ENCODE measurements at regions of chr20 and their contacts with region 1.

Region 1: GRCh38 chr20:44388466-44389023 is 33.0 kb downstream of the HNF4A start:
- DNase-seq: peak; percentile 78
- H3K4me3 ChIP-seq: no peak overlapping the region
- H3K27ac ChIP-seq: no peak overlapping the region
- H3K4me1 ChIP-seq: peaks cover 13% of the 10 kb centered on the region
- H3K27me3 ChIP-seq: no peaks in the 10 kb centered on the region
- CTCF ChIP-seq: peak; percentile 92 to 96

Region 2: GRCh38 chr20:44123251-44123650 is 265.3 kb before region 1 on chr20:
- CTCF ChIA-PET with region 1: interaction called, 12 read pairs
- dilution Hi-C with region 1: loop called (anchors 5 kb)
- in situ Hi-C with region 1: no loop called
- intact Hi-C with region 1: no loop called
- DNase-seq: no peak
- H3K4me3 ChIP-seq: no peak overlapping the region
- H3K27ac ChIP-seq: no peak overlapping the region
- H3K4me1 ChIP-seq: no peaks in the 10 kb centered on the region
- H3K27me3 ChIP-seq: no peaks in the 10 kb centered on the region
- CTCF ChIP-seq: no peak

Region 3: GRCh38 chr20:44310664-44311639 is 77.6 kb before region 1 on chr20 and contains the start of gene FITM2:
- CTCF ChIA-PET with region 1: no interaction called
- dilution Hi-C with region 1: no loop called
- in situ Hi-C with region 1: no loop called
- intact Hi-C with region 1: loop called (anchors 5 kb)
- DNase-seq: peak; percentile 95
- H3K4me3 ChIP-seq: peak within 1 kb of the TSS; percentile 79 to 97 (median 81)
- H3K27ac ChIP-seq: peak within 1 kb of the TSS; percentile 35
- H3K4me1 ChIP-seq: peaks cover 11% of the 10 kb centered on the region
- H3K27me3 ChIP-seq: no peaks in the 10 kb centered on the region
- CTCF ChIP-seq: peak; percentile 85 to 98
- total RNA-seq, gene FITM2: 7.6 to 10.3 TPM

Region 4: DNA sequence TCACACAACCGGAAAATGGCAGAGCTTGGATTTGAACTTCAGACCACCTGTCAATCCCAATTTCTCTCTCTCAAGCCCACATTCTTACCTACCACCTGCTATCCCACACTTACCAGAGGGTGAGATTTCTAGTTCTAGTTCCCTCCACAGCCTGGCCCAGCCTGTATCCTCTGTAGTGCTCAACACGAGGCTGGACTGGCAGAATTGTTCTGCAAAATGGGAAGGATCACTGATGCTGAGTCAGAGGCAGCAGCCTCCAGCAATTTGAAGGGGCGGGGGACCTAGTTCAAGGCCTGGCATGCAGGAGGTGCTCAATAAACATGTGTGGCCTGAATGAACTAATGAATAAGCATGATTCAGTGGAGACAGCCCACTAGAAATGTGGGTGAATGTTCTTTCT is 33.5 kb after region 1 on chr20:
- CTCF ChIA-PET with region 1: no interaction called
- dilution Hi-C with region 1: no loop called
- in situ Hi-C with region 1: no loop called
- intact Hi-C with region 1: no loop called
- DNase-seq: peak; percentile 89
- H3K4me3 ChIP-seq: no peak overlapping the region
- H3K27ac ChIP-seq: no peak overlapping the region
- H3K4me1 ChIP-seq: peaks cover 10% of the 10 kb centered on the region
- H3K27me3 ChIP-seq: no peaks in the 10 kb centered on the region
- CTCF ChIP-seq: no peak

Region 5: GRCh38 chr20:44460795-44461141 is 72.2 kb after region 1 on chr20:
- CTCF ChIA-PET with region 1: interaction called, 4 read pairs
- dilution Hi-C with region 1: no loop called
- in situ Hi-C with region 1: loop called (anchors 5 kb)
- intact Hi-C with region 1: loop called (anchors 1 kb)
- DNase-seq: peak; percentile 27
- H3K4me3 ChIP-seq: no peak overlapping the region
- H3K27ac ChIP-seq: no peak overlapping the region
- H3K4me1 ChIP-seq: peaks cover 11% of the 10 kb centered on the region
- H3K27me3 ChIP-seq: no peaks in the 10 kb centered on the region
- CTCF ChIP-seq: peak; percentile 50 to 65

Region 6: GRCh38 chr20:44521484-44522481 is 133.2 kb after region 1 on chr20 and contains the start of gene SERINC3:
- CTCF ChIA-PET with region 1: no interaction called
- dilution Hi-C with region 1: no loop called
- in situ Hi-C with region 1: no loop called
- intact Hi-C with region 1: loop called (anchors 5 kb)
- DNase-seq: peak; percentile 96
- H3K4me3 ChIP-seq: peak within 1 kb of the TSS; percentile 95 to 99 (median 99)
- H3K27ac ChIP-seq: peak within 1 kb of the TSS; percentile 99
- H3K4me1 ChIP-seq: peaks cover 32% of the 10 kb centered on the region
- H3K27me3 ChIP-seq: no peaks in the 10 kb centered on the region
- CTCF ChIP-seq: peak in 1 of 2 donors; percentile 33
- total RNA-seq, gene SERINC3: 101 to 153 TPM

Region 7: GRCh38 chr20:44683263-44684046 is 294.9 kb after region 1 on chr20:
- CTCF ChIA-PET with region 1: no interaction called
- dilution Hi-C with region 1: no loop called
- in situ Hi-C with region 1: no loop called
- intact Hi-C with region 1: loop called (anchors 1 kb)
- DNase-seq: peak; percentile 58
- H3K4me3 ChIP-seq: no peak overlapping the region
- H3K27ac ChIP-seq: no peak overlapping the region
- H3K4me1 ChIP-seq: peaks cover 8% of the 10 kb centered on the region
- H3K27me3 ChIP-seq: no peaks in the 10 kb centered on the region
- CTCF ChIP-seq: peak; percentile 63 to 84

Region 8: GRCh38 chr20:44747166-44748004 is 358.8 kb after region 1 on chr20:
- CTCF ChIA-PET with region 1: no interaction called
- dilution Hi-C with region 1: loop called (anchors 10 kb)
- in situ Hi-C with region 1: no loop called
- intact Hi-C with region 1: no loop called
- DNase-seq: peak; percentile 87
- H3K4me3 ChIP-seq: no peak overlapping the region
- H3K27ac ChIP-seq: no peak overlapping the region
- H3K4me1 ChIP-seq: peaks cover 18% of the 10 kb centered on the region
- H3K27me3 ChIP-seq: peaks cover 7% of the 10 kb centered on the region
- CTCF ChIP-seq: peak; percentile 77 to 79

Measured in mammary epithelial cell (primary cell).